Heart right ventricle (tissue), 16 donors: ENCODE measurements at regions of chr3 and their contacts with region 1.

Region 1: GRCh38 chr3:13452490-13453335 is 27.4 kb upstream of the HDAC11 start:
- DNase-seq: peak in 1 of 2 donors; percentile 57
- ATAC-seq: peak in 7 of 8 donors; percentile 24 to 75 (median 62)
- H3K4me3 ChIP-seq: peak overlapping the region in 8 of 10 donors; percentile 43 to 66 (median 56)
- H3K27ac ChIP-seq: peak overlapping the region in 8 of 10 donors; percentile 41 to 85 (median 71)
- H3K4me1 ChIP-seq: peaks cover 0 to 18% (median 6%) of the 10 kb centered on the region in 9 donors
- H3K27me3 ChIP-seq: no peaks in the 10 kb centered on the region
- CTCF ChIP-seq: peak; percentile 36 to 77 (median 60)

Region 2: GRCh38 chr3:12868039-12869034 is 584.4 kb before region 1 on chr3:
- intact Hi-C with region 1: loop called in 1 of 10 experiments (anchors 2 kb)
- DNase-seq: peak; percentile 83 to 85
- ATAC-seq: peak; percentile 86 to 95 (median 94)
- H3K4me3 ChIP-seq: peak overlapping the region in 8 of 10 donors; percentile 14 to 42 (median 32)
- H3K27ac ChIP-seq: no peak overlapping the region
- H3K4me1 ChIP-seq: peaks cover 0 to 15% (median 11%) of the 10 kb centered on the region in 9 donors
- H3K27me3 ChIP-seq: peaks cover 0 to 16% (median 0%) of the 10 kb centered on the region in 7 donors
- CTCF ChIP-seq: peak; percentile 87 to 97 (median 92)

Region 3: GRCh38 chr3:12994607-12995388 is 457.9 kb before region 1 on chr3:
- intact Hi-C with region 1: loop called in 1 of 10 experiments (anchors 10 kb)
- DNase-seq: peak; percentile 90
- ATAC-seq: peak; percentile 76 to 90 (median 84)
- H3K4me3 ChIP-seq: peak overlapping the region; percentile 69 to 94 (median 85)
- H3K27ac ChIP-seq: peak overlapping the region; percentile 73 to 95 (median 92)
- H3K4me1 ChIP-seq: peaks cover 8 to 79% (median 45%) of the 10 kb centered on the region in 9 donors
- H3K27me3 ChIP-seq: no peaks in the 10 kb centered on the region
- CTCF ChIP-seq: peak; percentile 87 to 99 (median 95)

Region 4: GRCh38 chr3:13091898-13092611 is 360.7 kb before region 1 on chr3:
- intact Hi-C with region 1: loop called (anchors 1 to 5 kb)
- DNase-seq: peak; percentile 86 to 89
- ATAC-seq: peak; percentile 75 to 89 (median 82)
- H3K4me3 ChIP-seq: peak overlapping the region in 5 of 10 donors; percentile 8 to 32 (median 13)
- H3K27ac ChIP-seq: peak overlapping the region in 6 of 10 donors; percentile 3 to 78 (median 37)
- H3K4me1 ChIP-seq: peaks cover 0 to 24% (median 15%) of the 10 kb centered on the region in 9 donors
- H3K27me3 ChIP-seq: no peaks in the 10 kb centered on the region
- CTCF ChIP-seq: peak; percentile 92 to 98 (median 97)

Region 5: GRCh38 chr3:13282986-13283876 is 169.5 kb before region 1 on chr3:
- intact Hi-C with region 1: loop called in 1 of 10 experiments (anchors 10 kb)
- DNase-seq: peak in 1 of 2 donors; percentile 46
- ATAC-seq: peak in 2 of 8 donors; percentile 28 to 44
- H3K4me3 ChIP-seq: peak overlapping the region; percentile 25 to 80 (median 66)
- H3K27ac ChIP-seq: peak overlapping the region in 5 of 10 donors; percentile 44 to 91 (median 85)
- H3K4me1 ChIP-seq: peaks cover 0 to 29% (median 15%) of the 10 kb centered on the region in 9 donors
- H3K27me3 ChIP-seq: peaks cover 9 to 78% (median 51%) of the 10 kb centered on the region in 7 donors
- CTCF ChIP-seq: peak in 8 of 9 donors; percentile 11 to 55 (median 34)

Region 6: DNA sequence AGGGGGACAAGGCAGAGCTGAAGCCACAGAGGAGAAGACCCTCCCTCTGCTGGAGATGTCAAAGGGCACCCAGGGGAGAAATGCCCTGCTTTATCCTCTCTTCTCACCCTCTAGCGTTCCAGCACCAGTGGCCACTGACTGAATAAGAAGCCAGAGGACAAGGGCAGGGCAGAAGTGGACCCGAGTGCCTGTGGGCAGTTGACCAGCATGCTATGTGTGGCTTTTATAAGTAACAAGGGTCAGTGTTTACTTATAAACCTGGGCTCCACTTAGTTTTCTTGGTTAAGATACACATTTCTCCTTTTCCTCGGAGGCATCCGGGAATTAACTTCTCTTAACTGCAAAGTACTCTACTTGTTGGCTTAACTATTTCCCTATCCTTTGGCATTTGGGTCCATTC is 14.1 kb after region 1 on chr3:
- intact Hi-C with region 1: loop called in 1 of 10 experiments (anchors 1 kb)
- DNase-seq: no peak
- ATAC-seq: no peak
- H3K4me3 ChIP-seq: no peak overlapping the region
- H3K27ac ChIP-seq: no peak overlapping the region
- H3K4me1 ChIP-seq: peaks cover 0 to 13% (median 0%) of the 10 kb centered on the region in 9 donors
- H3K27me3 ChIP-seq: peaks cover 0 to 14% (median 0%) of the 10 kb centered on the region in 7 donors
- CTCF ChIP-seq: no peak

Region 7: GRCh38 chr3:13479581-13480339 is 27.0 kb after region 1 on chr3 and contains the start of gene HDAC11:
- intact Hi-C with region 1: loop called in 1 of 10 experiments (anchors 2 kb)
- DNase-seq: peak; percentile 99 to 100
- ATAC-seq: peak; percentile 97 to 99 (median 99)
- H3K4me3 ChIP-seq: peak within 1 kb of the TSS; percentile 49 to 91 (median 84)
- H3K27ac ChIP-seq: peak within 1 kb of the TSS; percentile 72 to 98 (median 94)
- H3K4me1 ChIP-seq: peaks cover 0 to 28% (median 19%) of the 10 kb centered on the region in 9 donors
- H3K27me3 ChIP-seq: no peaks in the 10 kb centered on the region
- CTCF ChIP-seq: peak in 7 of 9 donors; percentile 35 to 56 (median 45)
- total RNA-seq, gene HDAC11: 26.6 to 46.0 (median 33.7) TPM

Region 8: DNA sequence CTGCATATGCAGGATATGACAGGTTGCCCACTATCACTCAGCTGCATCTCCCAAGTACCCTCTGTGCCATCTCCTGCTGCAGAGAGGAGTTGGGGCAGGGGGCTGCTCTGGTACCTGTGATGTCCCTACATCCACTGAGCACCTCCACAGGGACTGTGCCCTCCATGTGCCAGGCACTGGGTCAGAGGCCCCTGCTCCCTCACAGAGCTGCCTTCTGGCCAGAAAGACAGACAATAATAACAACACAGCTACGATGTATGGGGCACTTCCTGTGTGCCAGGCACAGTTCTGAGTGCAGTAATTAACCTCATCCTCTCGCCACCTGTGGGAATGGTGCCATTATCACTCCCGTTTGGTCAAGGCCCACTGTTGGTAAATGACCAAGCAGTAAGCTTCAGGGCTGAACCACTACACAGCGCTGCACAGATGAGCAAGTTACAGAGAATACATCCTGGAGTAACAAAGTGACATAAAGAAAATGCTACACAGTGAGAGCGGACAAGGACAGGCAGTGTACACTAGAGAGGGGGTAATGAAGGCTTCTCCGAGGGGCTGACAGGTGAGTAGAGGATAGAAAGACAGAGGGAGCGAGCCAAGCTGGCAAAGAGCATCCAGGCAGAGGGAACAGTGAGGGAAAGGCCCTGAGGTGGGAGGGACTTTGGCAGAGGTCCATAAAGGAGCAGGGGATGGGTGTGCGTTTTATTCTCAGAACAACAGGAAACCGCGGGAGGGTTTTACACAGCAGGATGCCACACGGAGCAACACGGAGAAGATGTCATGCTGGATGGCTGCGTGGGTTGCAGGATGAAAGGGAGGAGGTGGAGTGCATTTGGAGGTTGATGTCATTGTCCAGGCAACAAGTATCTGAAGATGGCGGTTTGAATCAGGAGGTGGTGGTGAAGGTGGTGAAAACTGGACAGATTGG is 413.6 kb after region 1 on chr3:
- intact Hi-C with region 1: no loop called
- DNase-seq: no peak
- ATAC-seq: no peak
- H3K4me3 ChIP-seq: no peak overlapping the region
- H3K27ac ChIP-seq: no peak overlapping the region
- H3K4me1 ChIP-seq: no peaks in the 10 kb centered on the region
- H3K27me3 ChIP-seq: peaks cover 0 to 65% (median 52%) of the 10 kb centered on the region in 7 donors
- CTCF ChIP-seq: no peak